Activated B cell treated with CpG ODN at 0.5 μM for 24 hours (primary cell): ENCODE measurements at regions of chr10 and their contacts with region 1.

Region 1: GRCh38 chr10:16663444-16663843 is 141.8 kb upstream of the C1QL3 start:
- DNase-seq: no peak
- ATAC-seq: no peak
- H3K4me3 Mint-ChIP-seq: no peak overlapping the region
- H3K27ac Mint-ChIP-seq: no peak overlapping the region
- H3K4me1 Mint-ChIP-seq: no peaks in the 10 kb centered on the region
- H3K27me3 Mint-ChIP-seq: no peaks in the 10 kb centered on the region
- CTCF ChIP-seq: no peak

Region 2: GRCh38 chr10:15901889-15902288 is 761.6 kb before region 1 on chr10:
- CTCF ChIA-PET with region 1: no interaction called
- POLR2A ChIA-PET with region 1: no interaction called
- intact Hi-C with region 1: no loop called
- DNase-seq: no peak
- ATAC-seq: no peak
- H3K4me3 Mint-ChIP-seq: no peak overlapping the region
- H3K27ac Mint-ChIP-seq: no peak overlapping the region
- H3K4me1 Mint-ChIP-seq: no peaks in the 10 kb centered on the region
- H3K27me3 Mint-ChIP-seq: peaks cover 6% of the 10 kb centered on the region
- CTCF ChIP-seq: no peak

Region 3: GRCh38 chr10:16570731-16571130 is 92.7 kb before region 1 on chr10:
- CTCF ChIA-PET with region 1: no interaction called
- POLR2A ChIA-PET with region 1: no interaction called
- intact Hi-C with region 1: no loop called
- DNase-seq: no peak
- ATAC-seq: peak; percentile 37
- H3K4me3 Mint-ChIP-seq: no peak overlapping the region
- H3K27ac Mint-ChIP-seq: no peak overlapping the region
- H3K4me1 Mint-ChIP-seq: peaks cover 5% of the 10 kb centered on the region
- H3K27me3 Mint-ChIP-seq: peaks cover 4% of the 10 kb centered on the region
- CTCF ChIP-seq: no peak

Region 4: GRCh38 chr10:16611037-16611436 is 52.4 kb before region 1 on chr10:
- CTCF ChIA-PET with region 1: no interaction called
- POLR2A ChIA-PET with region 1: no interaction called
- intact Hi-C with region 1: loop called (anchors 2 kb)
- DNase-seq: no peak
- ATAC-seq: no peak
- H3K4me3 Mint-ChIP-seq: no peak overlapping the region
- H3K27ac Mint-ChIP-seq: no peak overlapping the region
- H3K4me1 Mint-ChIP-seq: peaks cover 7% of the 10 kb centered on the region
- H3K27me3 Mint-ChIP-seq: no peaks in the 10 kb centered on the region
- CTCF ChIP-seq: no peak

Region 5: GRCh38 chr10:16689227-16689626 is 25.8 kb after region 1 on chr10:
- CTCF ChIA-PET with region 1: no interaction called
- POLR2A ChIA-PET with region 1: no interaction called
- intact Hi-C with region 1: no loop called
- DNase-seq: no peak
- ATAC-seq: no peak
- H3K4me3 Mint-ChIP-seq: no peak overlapping the region
- H3K27ac Mint-ChIP-seq: no peak overlapping the region
- H3K4me1 Mint-ChIP-seq: no peaks in the 10 kb centered on the region
- H3K27me3 Mint-ChIP-seq: no peaks in the 10 kb centered on the region
- CTCF ChIP-seq: no peak